ENCODE measurements at regions of chr9 and their contacts with region 1.

Region 1: GRCh38 chr9:123162359-123163345 is 105.7 kb downstream of the STRBP start:
- DNase-seq: no peak
- ATAC-seq: no peak
- H3K4me3 ChIP-seq: no peak overlapping the region
- H3K27ac ChIP-seq: no peak overlapping the region
- H3K4me1 ChIP-seq: peaks cover 4% of the 10 kb centered on the region
- H3K27me3 ChIP-seq: no peaks in the 10 kb centered on the region
- CTCF ChIP-seq: no peak
- EP300 ChIP-seq: no peak
- POLR2A ChIP-seq: no peak
- RAD21 ChIP-seq: no peak

Region 2: DNA sequence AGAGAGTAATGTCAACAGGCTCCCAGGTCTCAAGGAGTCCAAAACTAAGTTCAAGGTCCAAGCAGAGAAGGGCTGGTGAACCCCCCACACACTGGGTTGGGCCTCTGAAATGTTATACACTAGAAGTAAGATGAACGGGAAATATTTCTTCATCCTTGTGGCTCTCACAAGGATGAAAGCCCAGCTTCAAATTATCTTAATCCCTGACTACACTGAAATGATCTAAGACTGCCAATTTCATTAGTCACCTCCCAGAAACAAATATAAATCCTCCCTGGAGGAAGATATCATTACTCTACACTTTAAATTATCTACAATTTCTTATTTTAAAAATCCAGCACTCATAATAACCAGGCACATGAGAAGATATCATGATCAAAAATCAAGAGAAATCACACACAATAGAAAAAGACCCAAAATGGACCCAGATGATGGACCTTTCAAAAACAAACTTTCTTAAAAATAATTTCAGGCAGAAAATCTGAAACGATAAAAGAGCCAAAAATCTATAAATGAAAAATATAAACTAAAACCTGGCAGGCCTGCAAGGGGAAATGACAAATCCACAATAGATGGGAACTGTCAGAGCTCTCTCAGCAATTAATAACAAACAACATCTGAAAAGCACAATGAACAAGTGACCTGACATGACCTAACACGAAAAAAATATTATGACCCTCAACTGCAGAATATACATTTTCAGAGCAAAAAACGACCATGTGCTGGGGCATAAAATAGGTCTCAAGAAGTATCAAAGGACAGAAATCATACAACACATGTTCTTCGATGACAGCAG is 11.7 kb before region 1 on chr9:
- CTCF ChIA-PET with region 1: no interaction called
- POLR2A ChIA-PET with region 1: interaction called, 4 read pairs
- RAD21 ChIA-PET with region 1: no interaction called
- SMC1A ChIA-PET with region 1: interaction called, 11 read pairs
- in situ Hi-C with region 1: no loop called
- intact Hi-C with region 1: no loop called
- DNase-seq: no peak
- ATAC-seq: no peak
- H3K4me3 ChIP-seq: no peak overlapping the region
- H3K27ac ChIP-seq: no peak overlapping the region
- H3K4me1 ChIP-seq: no peaks in the 10 kb centered on the region
- H3K27me3 ChIP-seq: no peaks in the 10 kb centered on the region
- CTCF ChIP-seq: no peak
- EP300 ChIP-seq: no peak
- POLR2A ChIP-seq: no peak
- RAD21 ChIP-seq: no peak

Region 3: GRCh38 chr9:125074976-125075375 is 1912.3 kb after region 1 on chr9:
- CTCF ChIA-PET with region 1: no interaction called
- POLR2A ChIA-PET with region 1: no interaction called
- RAD21 ChIA-PET with region 1: no interaction called
- SMC1A ChIA-PET with region 1: no interaction called
- in situ Hi-C with region 1: no loop called
- intact Hi-C with region 1: no loop called
- DNase-seq: no peak
- ATAC-seq: no peak
- H3K4me3 ChIP-seq: no peak overlapping the region
- H3K27ac ChIP-seq: no peak overlapping the region
- H3K4me1 ChIP-seq: no peaks in the 10 kb centered on the region
- H3K27me3 ChIP-seq: no peaks in the 10 kb centered on the region
- CTCF ChIP-seq: no peak
- EP300 ChIP-seq: no peak
- POLR2A ChIP-seq: no peak
- RAD21 ChIP-seq: no peak